ENCODE measurements at regions of chr6 and their contacts with region 1.

Region 1: DNA sequence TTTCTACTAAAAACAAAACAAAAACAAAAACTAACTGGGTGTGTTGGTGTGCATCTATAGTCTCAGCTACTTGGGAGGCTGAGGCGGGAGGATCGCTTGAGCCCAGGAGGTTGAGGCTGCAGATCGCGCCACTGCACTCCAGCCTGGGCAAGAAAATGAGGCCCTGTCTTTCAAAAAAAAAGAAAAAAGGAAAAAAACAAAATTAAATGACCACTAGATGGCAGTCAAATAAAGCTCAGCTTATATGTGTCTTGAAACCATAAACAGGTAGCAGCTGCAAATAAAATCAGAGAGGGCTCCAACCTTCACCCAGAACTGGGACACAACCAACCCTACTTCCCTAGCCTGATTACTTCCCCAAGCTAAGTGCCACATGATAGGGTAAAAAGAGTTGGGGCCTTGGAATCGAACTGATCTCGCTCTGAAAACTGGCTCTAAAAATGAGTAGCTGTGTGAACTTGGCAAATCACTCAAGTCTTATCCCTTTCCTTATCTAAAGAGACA is 67.1 kb upstream of the ADGRF4 start:
- DNase-seq: no peak
- ATAC-seq: peak; percentile 65

Region 2: DNA sequence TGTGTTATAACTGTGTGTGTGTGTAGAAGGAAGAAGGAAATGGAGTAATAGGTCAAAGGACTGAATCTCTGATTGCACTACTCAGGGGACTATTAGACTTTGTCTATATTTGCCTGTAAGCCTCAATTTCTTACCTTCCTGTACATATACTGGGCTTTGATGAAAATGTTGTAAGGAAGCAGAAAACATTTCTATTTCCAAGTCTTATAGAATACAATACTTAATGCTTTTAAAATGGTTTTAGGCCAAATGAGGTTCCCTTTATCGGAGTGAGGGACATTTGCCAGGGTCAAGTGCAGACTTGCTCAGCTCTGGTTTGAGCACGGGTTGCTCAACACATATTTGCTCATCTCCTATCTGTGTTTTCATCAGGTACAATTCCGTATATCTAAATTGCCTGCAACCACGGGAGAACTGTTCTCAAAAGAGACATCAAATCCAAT is 809.8 kb before region 1 on chr6:
- intact Hi-C with region 1: no loop called
- DNase-seq: no peak
- ATAC-seq: no peak

Region 3: GRCh38 chr6:47733879-47734558 is 102.7 kb after region 1 on chr6:
- intact Hi-C with region 1: loop called (anchors 5 kb)
- DNase-seq: no peak
- ATAC-seq: no peak

Region 4: GRCh38 chr6:47780510-47781356 is 149.4 kb after region 1 on chr6:
- intact Hi-C with region 1: loop called (anchors 2 kb)
- DNase-seq: peak; percentile 33
- ATAC-seq: peak; percentile 79